Esophagus muscularis mucosa (tissue), 4 donors: ENCODE measurements at regions of chr7 and their contacts with region 1.

Region 1: DNA sequence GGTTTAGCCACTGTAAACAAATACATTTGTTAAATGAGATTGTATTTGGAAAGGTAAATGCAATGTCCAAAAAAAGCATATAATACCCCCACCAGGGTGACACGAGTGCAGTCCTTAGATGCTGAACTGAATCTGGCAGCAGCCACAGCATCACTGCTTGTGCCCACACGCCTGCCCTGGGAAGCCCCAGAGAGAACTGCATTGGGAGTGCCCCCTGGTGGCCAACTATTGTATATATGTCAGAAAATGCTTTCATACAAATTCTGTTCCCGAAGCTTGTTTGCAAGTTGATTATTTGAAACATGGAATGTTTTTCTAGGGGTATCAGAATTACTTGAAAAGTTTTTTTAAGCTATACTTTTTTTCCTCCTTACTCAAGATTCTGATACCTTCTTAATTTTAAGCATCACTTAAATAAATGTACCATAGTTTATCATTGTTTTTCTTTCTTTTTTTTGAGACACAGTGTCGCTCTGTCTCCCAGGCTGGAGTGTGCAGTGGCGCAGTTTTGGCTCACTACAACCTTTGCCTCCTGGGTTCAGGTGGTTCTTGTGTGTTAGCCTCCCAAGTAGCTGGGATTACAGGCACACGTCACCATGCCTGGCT is 50.1 kb downstream of the LANCL2 start:
- DNase-seq: no peak
- H3K4me3 ChIP-seq: no peak overlapping the region
- H3K27ac ChIP-seq: no peak overlapping the region
- H3K4me1 ChIP-seq: no peaks in the 10 kb centered on the region
- H3K27me3 ChIP-seq: no peaks in the 10 kb centered on the region
- CTCF ChIP-seq: peak; percentile 73 to 83 (median 80)
- EP300 ChIP-seq: no peak
- POLR2A ChIP-seq: no peak

Region 2: GRCh38 chr7:54788664-54789063 is 626.6 kb before region 1 on chr7:
- intact Hi-C with region 1: no loop called
- DNase-seq: no peak
- H3K4me3 ChIP-seq: peak overlapping the region in 1 of 4 donors; percentile 10
- H3K27ac ChIP-seq: no peak overlapping the region
- H3K4me1 ChIP-seq: peaks cover 4 to 10% (median 8%) of the 10 kb centered on the region in 4 donors
- H3K27me3 ChIP-seq: no peaks in the 10 kb centered on the region
- CTCF ChIP-seq: peak; percentile 71 to 80 (median 74)
- EP300 ChIP-seq: no peak
- POLR2A ChIP-seq: no peak

Region 3: DNA sequence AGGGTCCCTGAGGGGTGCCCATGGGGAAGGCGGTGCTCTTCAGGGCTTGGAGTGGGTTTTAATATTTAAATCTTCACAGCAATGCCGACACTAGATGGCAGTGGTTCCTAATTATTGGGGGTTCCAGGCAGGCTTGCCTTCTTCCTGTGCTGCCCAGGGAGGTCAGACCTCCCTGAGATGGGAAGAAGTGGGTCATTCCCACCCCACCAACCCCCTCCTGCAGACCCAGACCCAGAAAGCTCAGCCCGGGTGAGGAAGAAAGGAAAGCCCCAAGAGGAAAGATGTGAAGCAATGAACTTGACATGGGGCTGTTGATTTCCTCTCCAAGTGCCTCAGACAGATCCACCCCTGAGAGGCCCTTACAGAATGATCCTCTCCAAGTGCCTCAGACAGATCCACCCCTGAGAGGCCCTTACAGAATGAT is 135.2 kb before region 1 on chr7:
- intact Hi-C with region 1: loop called (anchors 1 kb)
- DNase-seq: peak; percentile 78
- H3K4me3 ChIP-seq: no peak overlapping the region
- H3K27ac ChIP-seq: no peak overlapping the region
- H3K4me1 ChIP-seq: no peaks in the 10 kb centered on the region
- H3K27me3 ChIP-seq: no peaks in the 10 kb centered on the region
- CTCF ChIP-seq: peak; percentile 57 to 68 (median 64)
- EP300 ChIP-seq: no peak
- POLR2A ChIP-seq: no peak

Region 4: DNA sequence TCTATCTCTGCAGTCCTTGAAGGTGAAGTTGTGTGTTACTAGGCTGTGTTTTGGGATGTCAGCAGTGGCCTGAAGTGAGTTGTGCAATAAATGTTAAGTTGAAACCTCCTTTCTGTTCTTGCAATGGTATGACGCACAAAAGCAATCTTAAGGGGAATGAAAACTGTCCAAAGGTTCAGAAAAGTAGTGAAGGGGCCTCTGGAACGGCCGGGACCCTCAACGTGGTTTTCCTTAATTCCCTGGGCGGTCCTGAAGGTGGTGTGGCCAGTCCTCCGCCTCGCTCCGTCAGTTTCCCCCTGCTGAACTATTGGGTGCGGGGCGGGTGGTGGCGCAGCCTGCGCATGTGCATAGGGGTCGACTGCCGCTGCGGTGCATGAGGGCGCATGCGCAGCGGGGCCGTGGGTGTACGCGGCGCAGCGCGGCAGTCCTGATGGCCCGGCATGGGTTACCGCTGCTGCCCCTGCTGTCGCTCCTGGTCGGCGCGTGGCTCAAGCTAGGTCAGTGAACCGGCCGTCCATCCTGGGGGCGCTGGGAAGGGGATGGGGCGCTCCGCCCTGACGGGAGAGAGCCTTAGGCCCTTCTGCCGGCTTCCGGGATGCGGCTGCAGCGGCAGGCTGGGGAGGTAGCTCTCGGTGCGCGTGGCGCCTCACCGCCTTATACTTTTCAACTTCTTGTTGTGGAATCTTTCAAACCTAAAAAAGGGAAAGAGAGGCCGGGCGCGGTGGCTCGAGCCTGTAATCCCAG is 648.8 kb after region 1 on chr7 and contains the start of gene SUMF2:
- intact Hi-C with region 1: no loop called
- DNase-seq: peak; percentile 97
- H3K4me3 ChIP-seq: peak within 1 kb of the TSS; percentile 72 to 90 (median 80)
- H3K27ac ChIP-seq: peak within 1 kb of the TSS; percentile 86 to 96 (median 92)
- H3K4me1 ChIP-seq: peaks cover 12 to 18% (median 15%) of the 10 kb centered on the region in 4 donors
- H3K27me3 ChIP-seq: no peaks in the 10 kb centered on the region
- CTCF ChIP-seq: peak in 2 of 3 experiments; percentile 19
- EP300 ChIP-seq: no peak
- POLR2A ChIP-seq: peak; percentile 85
- total RNA-seq, gene SUMF2: 71.4 to 93.2 (median 80.8) TPM